A673 (cell line): ENCODE measurements at regions of chr15 and their contacts with region 1.

Region 1: DNA sequence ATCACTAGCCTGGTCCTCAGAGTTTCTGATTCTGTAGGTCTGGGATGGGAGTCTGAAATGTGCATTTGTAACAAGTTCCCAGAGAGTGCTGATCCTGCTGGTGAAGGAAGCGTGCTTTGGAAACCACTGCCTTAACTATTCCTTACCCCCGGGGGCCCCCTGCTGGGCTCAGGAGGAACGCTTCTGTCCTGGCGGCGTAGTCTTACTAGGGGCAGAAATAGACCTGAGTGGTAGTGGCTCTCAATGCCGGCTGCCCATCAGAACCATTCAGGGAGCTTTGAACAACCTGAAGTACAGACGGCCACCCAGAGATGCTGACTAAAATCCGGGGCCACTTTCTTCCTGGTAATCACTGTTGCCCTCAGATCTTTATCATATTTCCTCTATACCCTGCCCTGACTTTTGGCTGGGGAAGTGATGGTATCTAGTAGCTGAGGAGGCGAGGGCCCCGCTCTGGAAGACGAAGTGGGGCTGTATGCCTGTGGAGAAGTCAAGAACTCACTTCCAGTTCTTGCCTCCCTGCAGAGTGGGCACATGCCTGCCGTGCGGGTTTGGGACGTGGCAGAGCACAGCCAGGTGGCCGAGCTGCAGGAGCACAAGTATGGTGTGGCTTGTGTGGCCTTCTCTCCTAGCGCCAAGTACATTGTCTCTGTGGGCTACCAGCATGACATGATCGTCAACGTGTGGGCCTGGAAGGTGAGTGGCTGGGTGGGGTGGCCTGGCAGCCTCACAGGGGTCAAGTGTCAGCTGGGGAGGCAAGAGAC is 16.3 kb upstream of the JMJD7 start:
- DNase-seq: peak; percentile 85
- H3K4me3 ChIP-seq: no peak overlapping the region
- H3K27ac ChIP-seq: no peak overlapping the region
- H3K4me1 ChIP-seq: no peaks in the 10 kb centered on the region
- H3K27me3 ChIP-seq: no peaks in the 10 kb centered on the region
- CTCF ChIP-seq: peak; percentile 82

Region 2: GRCh38 chr15:41465822-41466421 is 345.7 kb before region 1 on chr15:
- CTCF ChIA-PET with region 1: interaction called, 11 read pairs
- POLR2A ChIA-PET with region 1: no interaction called
- intact Hi-C with region 1: no loop called
- DNase-seq: peak; percentile 70
- H3K4me3 ChIP-seq: no peak overlapping the region
- H3K27ac ChIP-seq: no peak overlapping the region
- H3K4me1 ChIP-seq: no peaks in the 10 kb centered on the region
- H3K27me3 ChIP-seq: no peaks in the 10 kb centered on the region
- CTCF ChIP-seq: peak; percentile 94

Region 3: GRCh38 chr15:41557673-41558399 is 253.8 kb before region 1 on chr15:
- CTCF ChIA-PET with region 1: no interaction called
- POLR2A ChIA-PET with region 1: no interaction called
- intact Hi-C with region 1: loop called (anchors 1 kb)
- DNase-seq: peak; percentile 88
- H3K4me3 ChIP-seq: peak overlapping the region; percentile 68
- H3K27ac ChIP-seq: no peak overlapping the region
- H3K4me1 ChIP-seq: peaks cover 15% of the 10 kb centered on the region
- H3K27me3 ChIP-seq: no peaks in the 10 kb centered on the region
- CTCF ChIP-seq: peak; percentile 98

Region 4: DNA sequence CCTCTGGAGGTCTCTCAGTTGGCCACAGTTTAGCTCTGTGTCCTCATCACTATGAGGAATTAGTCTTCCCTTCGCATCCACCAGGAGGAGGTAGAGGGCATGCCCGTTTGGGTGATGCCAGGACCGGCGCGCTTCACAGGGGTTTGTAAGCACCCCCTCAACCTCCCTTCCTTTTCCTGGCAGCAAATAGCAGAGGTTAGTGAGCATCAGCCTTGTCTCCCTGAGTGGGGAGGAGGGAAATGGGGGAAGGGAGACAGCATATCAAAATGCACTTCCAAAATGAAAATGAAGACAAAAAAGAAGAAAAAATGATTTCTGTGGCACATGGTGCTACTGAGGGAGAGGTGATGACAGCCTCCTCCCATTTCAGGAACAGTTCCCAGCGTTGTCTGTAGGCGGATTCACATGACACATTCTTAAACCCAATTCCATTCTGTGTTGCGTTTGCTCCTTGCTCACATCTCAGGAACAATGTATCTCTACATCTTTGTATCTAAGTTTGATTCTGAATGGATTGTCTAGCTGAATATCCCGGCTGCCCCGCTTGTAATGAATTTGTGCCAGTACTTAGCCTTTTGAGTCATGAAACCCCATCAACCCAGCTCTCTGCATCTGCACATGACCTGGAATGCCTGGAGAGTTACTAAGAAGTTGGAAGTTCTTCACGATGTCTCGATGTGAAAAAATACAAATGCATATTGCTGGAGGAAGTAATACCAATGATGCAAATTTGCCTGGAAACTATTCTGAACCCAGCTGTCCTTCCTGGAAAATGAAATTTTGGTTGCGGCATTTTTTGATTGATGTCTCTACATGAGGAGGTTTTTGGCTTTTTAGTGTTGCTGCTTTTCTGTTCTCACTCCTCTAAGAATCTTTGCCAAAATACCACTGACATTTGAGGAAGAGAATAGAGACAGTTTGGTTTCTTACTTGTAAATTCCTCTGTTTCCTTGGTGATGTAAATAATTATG is 207.4 kb before region 1 on chr15:
- CTCF ChIA-PET with region 1: no interaction called
- POLR2A ChIA-PET with region 1: no interaction called
- intact Hi-C with region 1: loop called (anchors 5 kb)
- DNase-seq: peak; percentile 82
- H3K4me3 ChIP-seq: no peak overlapping the region
- H3K27ac ChIP-seq: no peak overlapping the region
- H3K4me1 ChIP-seq: peaks cover 8% of the 10 kb centered on the region
- H3K27me3 ChIP-seq: no peaks in the 10 kb centered on the region
- CTCF ChIP-seq: peak; percentile 82

Region 5: GRCh38 chr15:41774062-41774881 is 37.3 kb before region 1 on chr15 and contains the start of gene MAPKBP1:
- CTCF ChIA-PET with region 1: interaction called, 31 read pairs
- POLR2A ChIA-PET with region 1: no interaction called
- intact Hi-C with region 1: loop called (anchors 2 kb)
- DNase-seq: peak; percentile 99
- H3K4me3 ChIP-seq: peak within 1 kb of the TSS; percentile 65
- H3K27ac ChIP-seq: peak within 1 kb of the TSS; percentile 78
- H3K4me1 ChIP-seq: peaks cover 35% of the 10 kb centered on the region
- H3K27me3 ChIP-seq: no peaks in the 10 kb centered on the region
- CTCF ChIP-seq: peak; percentile 94
- total RNA-seq, gene MAPKBP1: 29.3 and 30.7 TPM in 2 replicates